Activated CD4-positive, alpha-beta memory T cell treated with anti-CD3 and anti-CD28 coated beads, Interleukin-2, amount 10 ng/mL, durations not matched to agents 7 days and 5 days (primary cell): ENCODE measurements at regions of chr6 and their contacts with region 1.

Region 1: DNA sequence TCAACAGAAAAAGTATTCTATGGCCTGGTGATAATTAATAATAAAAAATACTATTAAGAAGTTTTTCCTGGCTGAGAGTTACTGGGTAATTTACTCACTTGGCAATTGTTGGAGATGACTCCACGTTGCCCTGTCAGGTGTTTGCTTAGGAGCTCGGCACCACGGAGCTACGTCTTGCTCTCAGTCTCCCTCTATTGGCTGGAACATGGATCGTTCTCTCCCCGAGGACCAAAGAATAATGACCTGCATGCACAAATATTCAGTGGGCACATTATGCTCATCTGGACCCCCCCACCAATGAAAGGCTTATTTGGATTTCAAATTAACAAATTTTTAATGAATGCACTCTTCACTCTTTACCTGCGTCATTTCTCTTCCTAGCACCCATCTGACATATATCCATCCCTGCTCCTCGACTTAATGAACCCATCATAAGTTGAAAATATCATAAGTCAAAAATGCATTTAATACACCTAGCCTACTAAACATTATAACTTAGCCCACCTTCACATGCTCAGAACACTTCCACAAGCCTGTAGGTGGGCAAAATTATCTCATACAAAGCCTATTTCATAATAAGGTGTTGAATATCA is 71.0 kb upstream of the CD83 start:
- DNase-seq: peak; percentile 49
- H3K4me3 Mint-ChIP-seq: no peak overlapping the region
- H3K27ac Mint-ChIP-seq: no peak overlapping the region
- H3K4me1 Mint-ChIP-seq: no peaks in the 10 kb centered on the region
- H3K27me3 Mint-ChIP-seq: peaks cover 27% of the 10 kb centered on the region

Region 2: GRCh38 chr6:13908955-13909381 is 137.6 kb before region 1 on chr6:
- CTCF ChIA-PET with region 1: interaction called, 37 read pairs
- POLR2A ChIA-PET with region 1: no interaction called
- DNase-seq: peak; percentile 39
- H3K4me3 Mint-ChIP-seq: no peak overlapping the region
- H3K27ac Mint-ChIP-seq: no peak overlapping the region
- H3K4me1 Mint-ChIP-seq: no peaks in the 10 kb centered on the region
- H3K27me3 Mint-ChIP-seq: peaks cover 53% of the 10 kb centered on the region

Region 3: GRCh38 chr6:14060971-14061370 is 14.4 kb after region 1 on chr6:
- CTCF ChIA-PET with region 1: interaction called, 54 read pairs
- POLR2A ChIA-PET with region 1: no interaction called
- DNase-seq: no peak
- H3K4me3 Mint-ChIP-seq: no peak overlapping the region
- H3K27ac Mint-ChIP-seq: no peak overlapping the region
- H3K4me1 Mint-ChIP-seq: no peaks in the 10 kb centered on the region
- H3K27me3 Mint-ChIP-seq: peaks cover 48% of the 10 kb centered on the region

Region 4: DNA sequence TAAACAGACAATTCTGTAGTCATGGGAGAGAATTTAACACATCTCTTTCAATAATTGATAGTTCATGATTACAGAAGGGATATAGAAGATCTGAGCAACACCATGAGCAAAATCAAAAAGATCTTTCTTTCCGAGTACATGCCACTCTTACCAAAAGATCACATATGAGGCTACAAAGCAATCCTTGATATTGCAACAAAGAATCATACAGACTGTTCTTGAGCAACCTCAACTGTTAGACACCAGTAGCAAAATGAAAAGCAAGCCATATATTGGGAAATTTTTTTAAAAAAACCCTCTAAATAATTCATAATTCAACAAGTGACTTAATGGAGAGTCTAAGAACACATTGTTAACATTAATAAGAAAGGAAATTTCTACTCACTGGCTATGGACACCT is 67.4 kb after region 1 on chr6:
- CTCF ChIA-PET with region 1: no interaction called
- POLR2A ChIA-PET with region 1: no interaction called
- DNase-seq: no peak
- H3K4me3 Mint-ChIP-seq: no peak overlapping the region
- H3K27ac Mint-ChIP-seq: no peak overlapping the region
- H3K4me1 Mint-ChIP-seq: peaks cover 34% of the 10 kb centered on the region
- H3K27me3 Mint-ChIP-seq: peaks cover 44% of the 10 kb centered on the region